Naive thymus-derived CD4-positive, alpha-beta T cell (primary cell): ENCODE measurements at regions of chr19 and their contacts with region 1.

Region 1: GRCh38 chr19:5714819-5715218 is 5.1 kb downstream of the LONP1 start:
- DNase-seq: no peak
- ATAC-seq: no peak
- H3K4me3 ChIP-seq: no peak overlapping the region
- H3K4me3 Mint-ChIP-seq: no peak overlapping the region
- H3K27ac ChIP-seq: no peak overlapping the region
- H3K27ac Mint-ChIP-seq: no peak overlapping the region
- H3K4me1 ChIP-seq: peaks cover 12 to 13% of the 10 kb centered on the region in 2 donors
- H3K4me1 Mint-ChIP-seq: peaks cover 9 to 35% (median 29%) of the 10 kb centered on the region in 7 donors
- H3K27me3 ChIP-seq: no peaks in the 10 kb centered on the region
- H3K27me3 Mint-ChIP-seq: no peaks in the 10 kb centered on the region

Region 2: DNA sequence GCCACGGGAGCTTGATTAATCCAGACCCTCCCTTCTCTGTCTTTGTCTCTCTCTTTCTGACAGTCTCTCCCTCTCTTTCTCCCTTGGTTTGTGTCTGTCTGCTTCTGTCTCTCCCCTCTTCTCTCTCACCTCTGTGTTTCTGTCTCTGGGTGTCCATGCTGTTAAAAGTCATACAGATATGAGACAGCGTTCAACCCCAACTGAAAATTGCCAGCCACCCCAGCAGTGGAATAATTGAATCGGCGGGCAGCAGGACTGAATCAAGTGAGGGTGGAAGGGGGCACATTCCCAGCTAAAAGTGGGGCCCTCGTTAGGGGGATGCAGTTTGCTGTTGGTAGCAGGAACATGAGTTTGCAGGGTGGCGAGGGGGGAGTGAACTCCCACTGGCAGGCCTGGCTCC is 190.7 kb before region 1 on chr19:
- CTCF ChIA-PET with region 1: no interaction called
- POLR2A ChIA-PET with region 1: no interaction called
- intact Hi-C with region 1: no loop called
- DNase-seq: no peak
- ATAC-seq: no peak
- H3K4me3 ChIP-seq: no peak overlapping the region
- H3K4me3 Mint-ChIP-seq: no peak overlapping the region
- H3K27ac ChIP-seq: no peak overlapping the region
- H3K27ac Mint-ChIP-seq: peak overlapping the region in 1 of 9 donors; percentile 51
- H3K4me1 ChIP-seq: no peaks in the 10 kb centered on the region
- H3K4me1 Mint-ChIP-seq: peaks cover 0 to 4% (median 0%) of the 10 kb centered on the region in 7 donors
- H3K27me3 ChIP-seq: no peaks in the 10 kb centered on the region
- H3K27me3 Mint-ChIP-seq: peaks cover 1 to 47% (median 28%) of the 10 kb centered on the region in 5 donors

Region 3: DNA sequence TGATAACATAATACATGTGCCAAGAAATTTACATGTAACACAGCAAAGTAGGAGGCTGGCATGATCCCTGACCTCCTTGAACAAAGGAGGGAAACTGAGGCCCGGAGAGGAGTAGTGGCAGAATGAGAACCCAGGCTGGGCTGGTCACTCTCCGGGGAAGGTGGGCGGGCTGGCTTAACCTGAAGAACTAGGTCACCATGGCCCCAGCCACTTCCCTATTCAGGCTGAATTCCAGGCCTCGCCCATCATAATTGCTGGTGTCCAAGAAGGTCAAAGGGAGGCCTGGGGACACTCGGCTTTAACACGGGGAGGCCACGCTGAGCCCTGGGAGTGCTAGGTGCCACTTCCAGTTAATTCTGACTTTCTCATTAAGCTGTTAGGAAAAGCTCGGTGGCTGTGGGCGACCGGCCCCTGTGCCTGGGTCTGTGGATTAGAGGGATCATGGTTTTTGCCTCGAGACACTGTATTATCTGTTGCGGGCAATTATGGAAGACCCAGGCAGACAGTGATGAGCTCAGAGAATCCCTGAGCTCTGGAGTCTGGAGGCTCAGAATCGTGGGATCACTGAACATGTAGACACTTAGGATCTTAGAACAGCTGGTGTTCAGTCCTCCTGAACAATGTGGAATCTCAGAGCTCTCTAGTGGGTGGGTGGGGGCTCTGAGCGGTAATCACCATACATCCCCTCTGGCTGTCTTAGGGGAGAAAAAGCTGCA is 142.1 kb before region 1 on chr19:
- CTCF ChIA-PET with region 1: no interaction called
- POLR2A ChIA-PET with region 1: no interaction called
- intact Hi-C with region 1: no loop called
- DNase-seq: no peak
- ATAC-seq: no peak
- H3K4me3 ChIP-seq: no peak overlapping the region
- H3K4me3 Mint-ChIP-seq: no peak overlapping the region
- H3K27ac ChIP-seq: no peak overlapping the region
- H3K27ac Mint-ChIP-seq: no peak overlapping the region
- H3K4me1 ChIP-seq: no peaks in the 10 kb centered on the region
- H3K4me1 Mint-ChIP-seq: peaks cover under 1 to 2% (median 2%) of the 10 kb centered on the region in 7 donors
- H3K27me3 ChIP-seq: no peaks in the 10 kb centered on the region
- H3K27me3 Mint-ChIP-seq: peaks cover 0 to 10% (median 7%) of the 10 kb centered on the region in 5 donors

Region 4: DNA sequence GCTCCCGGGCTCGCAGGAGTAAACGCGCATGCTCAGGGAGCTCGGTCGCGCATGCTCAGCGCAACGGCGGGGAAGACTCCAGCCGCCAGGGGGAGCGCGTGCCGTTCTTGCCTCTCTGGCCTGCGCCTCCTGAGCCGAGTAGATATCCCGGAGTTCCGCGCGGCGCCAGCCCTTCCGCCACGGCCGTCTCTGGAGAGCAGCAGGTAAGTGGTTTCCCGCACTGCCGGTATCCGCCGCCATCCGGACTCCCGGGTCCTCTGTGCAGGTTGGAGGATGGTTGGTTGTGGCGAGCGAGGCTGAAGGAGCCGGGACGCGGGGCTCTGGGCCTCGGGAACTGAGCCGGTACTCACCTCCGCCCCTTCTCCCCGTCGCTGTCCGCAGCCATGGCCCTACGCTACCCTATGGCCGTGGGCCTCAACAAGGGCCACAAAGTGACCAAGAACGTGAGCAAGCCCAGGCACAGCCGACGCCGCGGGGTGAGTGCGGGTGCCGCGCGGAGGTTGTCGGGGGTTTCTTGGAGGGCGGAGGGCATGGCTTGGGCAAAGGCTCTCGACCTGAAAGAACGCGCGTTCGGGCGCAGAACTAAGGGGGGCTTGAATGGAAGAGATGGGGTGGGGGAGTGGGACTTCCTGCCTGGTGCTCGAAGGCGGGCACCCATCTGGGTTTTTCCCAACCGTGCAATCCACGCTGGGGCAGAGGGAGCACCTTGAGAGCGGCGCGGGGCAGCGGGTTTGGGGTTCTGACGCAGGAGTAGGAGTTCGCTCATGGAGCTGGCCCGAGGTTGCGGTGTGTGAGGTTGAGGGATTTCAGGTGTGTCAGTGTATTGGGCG is 24.5 kb before region 1 on chr19 and contains the start of gene RPL36:
- CTCF ChIA-PET with region 1: interaction called, 5 read pairs
- POLR2A ChIA-PET with region 1: interaction called, 32 read pairs
- intact Hi-C with region 1: loop called (anchors 1 kb)
- DNase-seq: peak; percentile 95 to 100 (median 99)
- ATAC-seq: peak; percentile 77
- H3K4me3 ChIP-seq: peak within 1 kb of the TSS; percentile 90
- H3K4me3 Mint-ChIP-seq: peak within 1 kb of the TSS; percentile 90 to 98 (median 94)
- H3K27ac ChIP-seq: peak within 1 kb of the TSS; percentile 85
- H3K27ac Mint-ChIP-seq: peak within 1 kb of the TSS; percentile 89 to 97 (median 93)
- H3K4me1 ChIP-seq: peaks cover 12 to 21% of the 10 kb centered on the region in 2 donors
- H3K4me1 Mint-ChIP-seq: peaks cover 5 to 39% (median 33%) of the 10 kb centered on the region in 7 donors
- H3K27me3 ChIP-seq: no peaks in the 10 kb centered on the region
- H3K27me3 Mint-ChIP-seq: no peaks in the 10 kb centered on the region
- total RNA-seq, gene RPL36: 865 to 1,786 (median 1,037) TPM